ENCODE measurements at regions of chr10 and their contacts with region 1.

Region 1: GRCh38 chr10:11178606-11179515 is 161.2 kb downstream of the CELF2 start:
- DNase-seq: peak; percentile 91
- H3K4me3 Mint-ChIP-seq: no peak overlapping the region
- H3K27ac Mint-ChIP-seq: peak overlapping the region; percentile 92
- H3K4me1 Mint-ChIP-seq: peaks cover 99% of the 10 kb centered on the region
- H3K27me3 Mint-ChIP-seq: no peaks in the 10 kb centered on the region

Region 2: GRCh38 chr10:11113156-11113555 is 65.7 kb before region 1 on chr10:
- CTCF ChIA-PET with region 1: interaction called, 11 read pairs
- DNase-seq: peak; percentile 38
- H3K4me3 Mint-ChIP-seq: no peak overlapping the region
- H3K27ac Mint-ChIP-seq: no peak overlapping the region
- H3K4me1 Mint-ChIP-seq: peaks cover 27% of the 10 kb centered on the region
- H3K27me3 Mint-ChIP-seq: no peaks in the 10 kb centered on the region

Region 3: GRCh38 chr10:11145495-11145855 is 33.4 kb before region 1 on chr10:
- CTCF ChIA-PET with region 1: interaction called, 14 read pairs
- DNase-seq: peak; percentile 84
- H3K4me3 Mint-ChIP-seq: peak overlapping the region; percentile 68
- H3K27ac Mint-ChIP-seq: peak overlapping the region; percentile 96
- H3K4me1 Mint-ChIP-seq: peaks cover 100% of the 10 kb centered on the region
- H3K27me3 Mint-ChIP-seq: no peaks in the 10 kb centered on the region

Region 4: DNA sequence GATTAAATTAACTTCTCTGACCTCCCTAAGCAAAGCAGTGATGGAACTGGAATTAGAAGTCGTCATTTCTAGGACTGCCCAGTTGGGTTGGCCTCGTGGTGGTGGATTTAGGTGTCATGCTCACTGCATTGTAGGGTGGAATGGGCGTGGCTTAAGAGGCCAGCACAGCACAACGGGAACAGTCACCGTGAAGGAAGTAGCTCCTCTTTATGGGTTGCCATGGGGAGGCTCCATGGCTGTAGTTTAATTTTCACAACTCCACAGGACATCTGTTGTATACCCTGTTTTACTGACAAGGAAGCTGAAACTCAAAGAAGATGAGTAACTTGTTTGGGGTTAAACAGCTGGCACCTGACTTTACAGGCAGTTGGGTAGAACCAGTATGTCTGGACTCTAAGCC is 47.1 kb after region 1 on chr10:
- CTCF ChIA-PET with region 1: interaction called, 11 read pairs
- DNase-seq: peak; percentile 71
- H3K4me3 Mint-ChIP-seq: peak overlapping the region; percentile 22
- H3K27ac Mint-ChIP-seq: peak overlapping the region; percentile 90
- H3K4me1 Mint-ChIP-seq: peaks cover 92% of the 10 kb centered on the region
- H3K27me3 Mint-ChIP-seq: no peaks in the 10 kb centered on the region

Region 5: DNA sequence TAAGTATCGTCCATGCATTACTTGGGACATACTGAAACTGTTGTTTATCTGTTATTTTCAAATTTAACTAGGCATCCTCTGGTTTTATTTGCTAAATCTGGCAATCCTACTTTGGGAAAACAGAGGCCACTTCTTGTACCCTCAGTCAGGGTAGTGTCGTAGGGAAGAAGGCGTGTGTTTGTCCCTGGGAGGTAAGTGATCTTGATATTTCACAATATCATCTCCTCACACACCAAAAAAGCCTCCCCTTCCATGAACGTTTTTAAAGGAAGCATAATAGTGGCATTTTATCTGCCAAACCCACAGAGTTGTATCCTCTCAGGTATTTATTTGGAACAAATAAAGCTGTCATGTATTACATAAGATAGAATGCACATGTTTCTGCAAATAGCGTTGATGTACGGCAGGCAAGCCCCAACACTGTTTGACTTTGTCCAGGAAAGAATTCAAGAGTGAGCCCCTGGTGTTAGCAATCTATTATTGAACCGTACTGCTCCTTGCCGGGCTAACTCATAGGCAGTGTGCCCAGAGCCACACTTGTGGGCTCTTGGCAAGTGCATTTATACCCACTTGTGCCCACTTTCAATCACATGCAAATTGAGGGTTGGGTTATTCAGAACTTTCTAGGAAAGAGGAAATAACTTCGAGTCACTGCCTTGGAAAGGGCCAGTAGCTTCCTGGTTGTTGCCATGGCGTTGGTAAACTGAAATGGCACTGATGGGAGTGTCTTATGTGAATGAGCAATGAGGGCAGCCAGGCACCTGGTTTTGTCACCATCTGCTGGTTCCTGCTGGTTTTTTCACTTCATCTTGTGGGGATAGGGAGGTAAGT is 166.6 kb after region 1 on chr10:
- CTCF ChIA-PET with region 1: no interaction called
- DNase-seq: no peak
- H3K4me3 Mint-ChIP-seq: no peak overlapping the region
- H3K27ac Mint-ChIP-seq: no peak overlapping the region
- H3K4me1 Mint-ChIP-seq: peaks cover 8% of the 10 kb centered on the region
- H3K27me3 Mint-ChIP-seq: peaks cover 12% of the 10 kb centered on the region